OCI-LY7 (cell line): ENCODE measurements at regions of chr1 and their contacts with region 1.

Region 1: GRCh38 chr1:63917571-63918417 is 144.0 kb downstream of the ROR1 start:
- DNase-seq: peak; percentile 51
- H3K4me3 ChIP-seq: no peak overlapping the region
- H3K27ac ChIP-seq: no peak overlapping the region
- H3K4me1 ChIP-seq: no peaks in the 10 kb centered on the region
- CTCF ChIP-seq: peak; percentile 71

Region 2: GRCh38 chr1:63615768-63616420 is 301.9 kb before region 1 on chr1:
- CTCF ChIA-PET with region 1: no interaction called
- POLR2A ChIA-PET with region 1: no interaction called
- intact Hi-C with region 1: loop called (anchors 5 kb)
- DNase-seq: peak; percentile 68
- H3K4me3 ChIP-seq: no peak overlapping the region
- H3K27ac ChIP-seq: no peak overlapping the region
- H3K4me1 ChIP-seq: peaks cover 4% of the 10 kb centered on the region
- CTCF ChIP-seq: peak; percentile 88

Region 3: GRCh38 chr1:63691701-63692425 is 225.9 kb before region 1 on chr1:
- CTCF ChIA-PET with region 1: interaction called, 5 read pairs
- POLR2A ChIA-PET with region 1: interaction called, 3 read pairs
- intact Hi-C with region 1: loop called (anchors 1 kb)
- DNase-seq: peak; percentile 68
- H3K4me3 ChIP-seq: no peak overlapping the region
- H3K27ac ChIP-seq: no peak overlapping the region
- H3K4me1 ChIP-seq: no peaks in the 10 kb centered on the region
- CTCF ChIP-seq: peak; percentile 89

Region 4: GRCh38 chr1:64663668-64664067 is 745.9 kb after region 1 on chr1:
- CTCF ChIA-PET with region 1: no interaction called
- POLR2A ChIA-PET with region 1: no interaction called
- intact Hi-C with region 1: no loop called
- DNase-seq: peak; percentile 10
- H3K4me3 ChIP-seq: no peak overlapping the region
- H3K27ac ChIP-seq: no peak overlapping the region
- H3K4me1 ChIP-seq: no peaks in the 10 kb centered on the region
- CTCF ChIP-seq: peak; percentile 61; the same call in 1 of the 2 replicates